ENCODE measurements at regions of chr1 and their contacts with region 1.

Region 1: GRCh38 chr1:960040-960756 is at the start of gene KLHL17:
- DNase-seq: no peak
- H3K4me3 ChIP-seq: peak within 1 kb of the TSS; percentile 96 to 97
- H3K27ac ChIP-seq: peak within 1 kb of the TSS; percentile 59
- H3K4me1 ChIP-seq: peaks cover 32% of the 10 kb centered on the region
- H3K27me3 ChIP-seq: no peaks in the 10 kb centered on the region
- CTCF ChIP-seq: no peak
- POLR2A ChIP-seq: no peak
- total RNA-seq, gene KLHL17: 19.6 TPM

Region 2: GRCh38 chr1:906600-907420 is 53.4 kb before region 1 on chr1:
- intact Hi-C with region 1: loop called (anchors 5 kb)
- DNase-seq: peak; percentile 81 to 87
- H3K4me3 ChIP-seq: no peak overlapping the region
- H3K27ac ChIP-seq: no peak overlapping the region
- H3K4me1 ChIP-seq: peaks cover 10% of the 10 kb centered on the region
- H3K27me3 ChIP-seq: no peaks in the 10 kb centered on the region
- CTCF ChIP-seq: no peak
- POLR2A ChIP-seq: no peak

Region 3: DNA sequence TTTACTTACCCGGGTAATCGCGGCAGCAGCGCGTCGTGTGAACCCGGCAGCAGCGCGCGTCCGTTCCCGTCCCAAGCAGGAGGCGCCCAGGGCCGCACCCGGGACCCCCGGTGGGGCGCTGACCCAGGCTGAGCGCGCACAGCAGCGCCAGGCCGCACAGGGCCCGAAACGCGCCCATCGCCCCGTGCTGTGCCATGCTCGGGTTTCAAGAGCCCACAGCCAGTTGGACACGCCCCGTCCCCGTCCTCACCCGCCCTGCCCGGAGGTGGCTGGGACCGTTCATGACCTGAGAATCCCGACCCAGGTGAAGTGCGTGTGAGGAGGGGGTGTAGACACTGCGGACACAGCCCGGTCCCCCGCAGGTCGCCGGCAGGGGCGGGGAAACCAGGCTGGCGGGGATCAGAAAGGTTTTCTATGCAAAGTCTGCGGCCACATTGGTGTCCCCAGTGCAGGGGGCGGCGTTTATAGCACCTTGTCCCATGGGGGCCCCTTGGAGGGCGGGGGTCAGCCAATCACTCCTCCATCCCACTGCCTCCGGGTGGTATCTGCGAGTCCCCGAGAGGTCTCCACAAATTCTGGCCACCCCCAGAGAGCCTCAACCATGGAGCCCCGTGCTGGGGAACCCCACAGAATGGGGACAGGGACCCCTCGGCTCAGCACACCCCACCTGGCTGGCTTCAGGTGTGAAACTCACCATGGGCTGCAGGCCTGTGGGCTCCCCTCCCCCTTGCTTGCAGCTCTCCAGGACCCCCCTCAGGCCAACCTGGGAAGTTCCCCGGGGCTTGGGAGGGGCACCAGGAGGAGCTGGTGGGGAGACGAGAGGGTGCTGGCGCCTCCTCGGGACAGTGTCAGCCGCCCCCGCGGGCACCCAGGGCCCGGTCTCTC is 246.4 kb after region 1 on chr1 and contains the start of gene TNFRSF18:
- intact Hi-C with region 1: no loop called
- DNase-seq: no peak
- H3K4me3 ChIP-seq: peak within 1 kb of the TSS; percentile 34 to 38
- H3K27ac ChIP-seq: peak within 1 kb of the TSS; percentile 48
- H3K4me1 ChIP-seq: peaks cover 43% of the 10 kb centered on the region
- H3K27me3 ChIP-seq: no peaks in the 10 kb centered on the region
- CTCF ChIP-seq: no peak
- POLR2A ChIP-seq: no peak
- total RNA-seq, gene TNFRSF18: 4.4 TPM

Measured in vagina (tissue), 2 donors.